Activated naive CD4-positive, alpha-beta T cell treated with anti-CD3 and anti-CD28 coated beads for 36 hours (primary cell): ENCODE measurements at regions of chr3 and their contacts with region 1.

Region 1: GRCh38 chr3:112136959-112137693 is 4.1 kb upstream of the GCSAM start:
- DNase-seq: peak; percentile 81
- H3K4me3 Mint-ChIP-seq: no peak overlapping the region
- H3K27ac Mint-ChIP-seq: no peak overlapping the region
- H3K4me1 Mint-ChIP-seq: peaks cover 64% of the 10 kb centered on the region
- H3K27me3 Mint-ChIP-seq: no peaks in the 10 kb centered on the region

Region 2: GRCh38 chr3:112111785-112112402 is 25.2 kb before region 1 on chr3:
- CTCF ChIA-PET with region 1: interaction called, 28 read pairs
- intact Hi-C with region 1: loop called (anchors 1 kb)
- DNase-seq: peak; percentile 79
- H3K4me3 Mint-ChIP-seq: no peak overlapping the region
- H3K27ac Mint-ChIP-seq: no peak overlapping the region
- H3K4me1 Mint-ChIP-seq: peaks cover 17% of the 10 kb centered on the region
- H3K27me3 Mint-ChIP-seq: peaks cover 3% of the 10 kb centered on the region

Region 3: DNA sequence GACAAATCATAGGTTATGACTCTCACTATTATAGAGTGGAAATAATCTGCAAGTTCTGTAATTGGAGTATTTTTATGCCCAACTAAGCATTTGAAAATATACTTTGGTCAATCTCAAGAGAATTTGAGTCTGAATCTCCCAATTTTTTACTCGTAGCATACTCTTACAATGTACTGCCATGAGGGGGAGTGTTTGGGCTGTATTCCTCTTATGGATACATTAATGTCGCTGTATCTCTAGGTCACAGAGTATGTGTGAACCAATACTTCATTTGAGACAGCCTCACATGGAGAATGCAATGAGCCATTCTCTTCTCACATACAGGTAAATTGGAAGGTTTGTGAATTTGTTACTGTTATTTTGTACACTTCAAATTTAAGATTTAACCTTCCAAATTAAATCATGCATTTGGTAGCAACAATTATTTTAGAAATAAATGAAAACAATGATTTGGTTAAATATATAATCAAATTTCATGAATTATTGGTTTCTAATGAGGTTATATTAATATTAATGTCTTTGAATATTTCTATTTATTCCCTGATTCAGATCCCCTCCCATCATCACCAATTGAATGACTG is 190.3 kb after region 1 on chr3:
- CTCF ChIA-PET with region 1: interaction called, 4 read pairs
- intact Hi-C with region 1: loop called (anchors 1 kb)
- DNase-seq: peak; percentile 65
- H3K4me3 Mint-ChIP-seq: no peak overlapping the region
- H3K27ac Mint-ChIP-seq: no peak overlapping the region
- H3K4me1 Mint-ChIP-seq: peaks cover 13% of the 10 kb centered on the region
- H3K27me3 Mint-ChIP-seq: peaks cover 9% of the 10 kb centered on the region

Region 4: GRCh38 chr3:112489674-112490479 is 352.8 kb after region 1 on chr3:
- CTCF ChIA-PET with region 1: no interaction called
- intact Hi-C with region 1: loop called (anchors 1 kb)
- DNase-seq: peak; percentile 56
- H3K4me3 Mint-ChIP-seq: peak overlapping the region; percentile 100
- H3K27ac Mint-ChIP-seq: peak overlapping the region; percentile 100
- H3K4me1 Mint-ChIP-seq: peaks cover 81% of the 10 kb centered on the region
- H3K27me3 Mint-ChIP-seq: no peaks in the 10 kb centered on the region

Region 5: DNA sequence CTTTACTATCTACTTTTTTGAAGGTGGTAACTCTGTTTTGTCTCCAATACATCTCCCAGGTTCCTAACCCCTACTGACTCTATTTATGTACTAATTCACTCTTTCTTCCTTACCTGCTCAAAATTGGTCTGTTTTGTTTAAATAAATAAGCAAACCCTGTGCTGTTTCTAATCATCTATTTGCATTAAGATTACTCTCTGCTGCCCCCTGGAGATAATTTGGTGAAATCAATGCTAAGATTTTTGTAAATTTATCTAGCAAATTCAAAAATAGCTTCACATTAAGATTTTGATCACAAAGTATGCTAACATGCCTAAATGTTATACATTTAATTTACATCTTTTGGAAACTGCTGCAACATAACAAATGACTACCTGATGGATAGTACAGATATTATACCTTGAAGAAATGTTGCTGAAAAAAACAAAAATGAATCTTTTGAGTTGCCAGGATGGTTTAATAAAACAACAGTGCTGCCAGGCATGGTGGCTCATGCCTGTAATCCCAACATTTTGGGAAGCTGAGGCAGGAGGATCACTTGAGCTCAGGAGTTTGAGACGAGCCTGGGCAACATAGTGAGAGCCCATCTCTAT is 842.2 kb after region 1 on chr3:
- CTCF ChIA-PET with region 1: no interaction called
- intact Hi-C with region 1: loop called (anchors 5 kb)
- DNase-seq: no peak
- H3K4me3 Mint-ChIP-seq: no peak overlapping the region
- H3K27ac Mint-ChIP-seq: no peak overlapping the region
- H3K4me1 Mint-ChIP-seq: peaks cover 64% of the 10 kb centered on the region
- H3K27me3 Mint-ChIP-seq: no peaks in the 10 kb centered on the region